ENCODE measurements at regions of chr21 and their contacts with region 1.

Region 1: DNA sequence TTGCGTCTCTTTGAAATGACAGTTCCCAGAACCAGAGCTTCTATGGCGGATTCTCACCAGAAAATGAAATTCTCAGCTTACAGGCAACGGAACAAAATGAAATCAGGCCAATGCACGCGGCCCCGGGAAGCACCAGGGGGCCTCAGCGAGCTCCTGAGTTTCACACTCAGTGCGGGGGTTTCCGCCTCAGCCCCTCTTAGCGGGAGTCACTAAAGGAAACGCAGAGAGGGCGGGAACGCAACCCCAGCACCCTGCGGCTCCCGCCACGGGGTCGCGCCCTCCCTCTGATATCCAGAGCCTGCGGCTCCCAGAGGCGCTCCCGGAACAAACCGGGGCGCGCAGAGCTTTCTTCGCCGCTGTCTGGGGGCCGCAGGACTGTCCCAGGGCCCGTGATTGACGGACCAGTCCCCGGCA is 7.9 kb upstream of the COL6A1 start:
- DNase-seq: peak; percentile 88
- ATAC-seq: peak; percentile 86
- H3K4me3 Mint-ChIP-seq: peak overlapping the region; percentile 78
- H3K27ac Mint-ChIP-seq: peak overlapping the region; percentile 57
- H3K4me1 Mint-ChIP-seq: peaks cover 18% of the 10 kb centered on the region
- H3K27me3 Mint-ChIP-seq: peaks cover 20% of the 10 kb centered on the region

Region 2: GRCh38 chr21:45709173-45709572 is 264.5 kb before region 1 on chr21:
- CTCF ChIA-PET with region 1: no interaction called
- POLR2A ChIA-PET with region 1: no interaction called
- DNase-seq: no peak
- ATAC-seq: no peak
- H3K4me3 Mint-ChIP-seq: no peak overlapping the region
- H3K27ac Mint-ChIP-seq: no peak overlapping the region
- H3K4me1 Mint-ChIP-seq: no peaks in the 10 kb centered on the region
- H3K27me3 Mint-ChIP-seq: no peaks in the 10 kb centered on the region

Region 3: GRCh38 chr21:45774291-45774690 is 199.4 kb before region 1 on chr21:
- CTCF ChIA-PET with region 1: no interaction called
- POLR2A ChIA-PET with region 1: no interaction called
- DNase-seq: no peak
- ATAC-seq: no peak
- H3K4me3 Mint-ChIP-seq: no peak overlapping the region
- H3K27ac Mint-ChIP-seq: no peak overlapping the region
- H3K4me1 Mint-ChIP-seq: no peaks in the 10 kb centered on the region
- H3K27me3 Mint-ChIP-seq: peaks cover 9% of the 10 kb centered on the region

Region 4: GRCh38 chr21:45830221-45830640 is 143.4 kb before region 1 on chr21:
- CTCF ChIA-PET with region 1: no interaction called
- POLR2A ChIA-PET with region 1: no interaction called
- DNase-seq: no peak
- ATAC-seq: no peak
- H3K4me3 Mint-ChIP-seq: no peak overlapping the region
- H3K27ac Mint-ChIP-seq: no peak overlapping the region
- H3K4me1 Mint-ChIP-seq: peaks cover 11% of the 10 kb centered on the region
- H3K27me3 Mint-ChIP-seq: no peaks in the 10 kb centered on the region

Region 5: DNA sequence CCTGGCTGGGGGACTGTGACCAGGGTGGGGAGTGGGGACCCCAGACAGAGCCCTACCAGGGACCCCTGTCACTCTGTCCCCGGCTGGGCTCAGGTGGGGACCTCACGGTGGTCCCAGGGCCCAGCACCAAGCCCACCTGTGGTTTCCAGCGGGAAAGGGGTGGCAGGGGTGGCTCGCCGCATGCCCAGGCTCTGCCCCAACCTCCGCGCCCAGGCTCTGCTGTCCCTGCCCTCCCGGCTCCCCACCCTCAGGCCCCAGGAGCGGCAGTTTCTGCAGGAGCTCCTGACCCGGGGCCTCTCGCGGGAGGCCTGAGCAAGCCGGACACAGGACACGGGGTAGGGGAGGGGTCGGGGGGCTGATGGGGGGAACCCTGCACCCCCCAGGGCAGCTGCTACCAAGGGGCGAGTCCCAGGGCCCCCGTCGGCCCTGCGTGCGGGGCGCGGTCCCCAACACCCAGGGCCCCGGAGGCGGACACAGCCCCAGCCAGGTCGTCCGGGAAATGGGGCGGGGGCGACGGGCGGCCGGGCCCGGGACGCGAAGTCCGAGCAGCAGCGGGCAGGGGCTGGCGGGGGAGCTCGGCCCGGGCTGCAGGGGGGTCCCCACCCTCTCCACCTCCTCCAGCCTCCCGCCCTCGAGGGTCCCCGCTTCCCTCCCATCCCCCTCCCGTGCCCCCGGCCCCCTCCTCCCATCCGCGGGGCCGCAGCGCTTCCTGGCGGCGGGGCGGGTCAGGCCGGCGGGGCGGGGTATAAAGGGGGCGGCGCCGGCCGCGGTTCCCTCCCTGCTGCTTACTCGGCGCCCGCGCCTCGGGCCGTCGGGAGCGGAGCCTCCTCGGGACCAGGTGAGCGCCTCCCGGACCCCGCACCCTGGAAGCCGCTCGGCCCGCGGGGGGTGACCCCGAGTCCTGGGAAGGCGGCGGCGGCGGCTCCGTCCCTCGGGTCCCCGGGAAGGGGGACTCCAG is 123.9 kb after region 1 on chr21 and contains the start of gene COL6A2:
- CTCF ChIA-PET with region 1: interaction called, 12 read pairs
- POLR2A ChIA-PET with region 1: no interaction called
- DNase-seq: peak; percentile 58
- ATAC-seq: peak; percentile 92
- H3K4me3 Mint-ChIP-seq: peak within 1 kb of the TSS; percentile 44
- H3K27ac Mint-ChIP-seq: peak within 1 kb of the TSS; percentile 7
- H3K4me1 Mint-ChIP-seq: peaks cover 1% of the 10 kb centered on the region
- H3K27me3 Mint-ChIP-seq: peaks cover 17% of the 10 kb centered on the region
- total RNA-seq, gene COL6A2: 6.0 to 7.2 TPM

Region 6: GRCh38 chr21:46171996-46172862 is 198.6 kb after region 1 on chr21:
- CTCF ChIA-PET with region 1: no interaction called
- POLR2A ChIA-PET with region 1: no interaction called
- DNase-seq: no peak
- ATAC-seq: no peak
- H3K4me3 Mint-ChIP-seq: no peak overlapping the region
- H3K27ac Mint-ChIP-seq: no peak overlapping the region
- H3K4me1 Mint-ChIP-seq: peaks cover 13% of the 10 kb centered on the region
- H3K27me3 Mint-ChIP-seq: peaks cover 19% of the 10 kb centered on the region